Activated CD4-positive, alpha-beta memory T cell treated with anti-CD3 and anti-CD28 coated beads for 36 hours (primary cell): ENCODE measurements at regions of chr1 and their contacts with region 1.

Region 1: GRCh38 chr1:17606826-17607440 is 67.4 kb downstream of the ARHGEF10L start:
- DNase-seq: peak; percentile 64
- H3K4me3 Mint-ChIP-seq: no peak overlapping the region
- H3K27ac Mint-ChIP-seq: no peak overlapping the region
- H3K4me1 Mint-ChIP-seq: no peaks in the 10 kb centered on the region
- H3K27me3 Mint-ChIP-seq: no peaks in the 10 kb centered on the region

Region 2: DNA sequence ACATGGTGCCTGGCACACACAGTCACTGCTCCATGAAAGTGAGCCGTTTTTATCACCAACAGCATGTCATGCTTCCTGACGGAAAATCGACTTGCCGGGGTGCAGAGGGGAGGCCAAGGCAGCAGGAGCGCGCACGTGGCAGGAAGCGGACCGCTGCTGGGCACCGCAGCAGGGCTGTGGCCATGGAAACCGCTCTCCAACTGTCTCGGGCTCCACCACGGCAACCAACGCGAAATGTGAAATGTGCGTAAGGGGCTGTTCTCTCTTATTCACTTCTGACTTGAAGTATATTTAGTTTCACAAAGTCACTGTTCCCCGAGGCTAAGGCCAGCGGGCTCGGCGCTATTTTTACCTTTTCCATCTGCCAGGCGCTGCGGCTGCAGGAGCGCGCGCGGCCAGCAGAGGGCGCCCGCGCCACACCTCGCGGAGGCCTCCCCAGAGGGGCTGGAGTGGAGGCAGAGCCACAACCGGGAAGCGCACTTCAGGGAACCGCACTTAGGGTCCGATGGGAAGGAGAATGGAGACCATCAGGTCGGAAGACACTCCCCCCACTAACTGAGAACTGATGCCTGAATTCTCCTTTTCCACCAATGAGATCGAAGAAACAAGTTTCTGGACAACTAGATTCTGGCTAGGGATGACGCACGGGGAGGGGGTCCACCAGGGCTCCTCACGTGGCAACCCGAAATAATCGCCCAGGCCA is 187.2 kb before region 1 on chr1:
- CTCF ChIA-PET with region 1: no interaction called
- POLR2A ChIA-PET with region 1: no interaction called
- intact Hi-C with region 1: no loop called
- DNase-seq: peak; percentile 71
- H3K4me3 Mint-ChIP-seq: no peak overlapping the region
- H3K27ac Mint-ChIP-seq: peak overlapping the region; percentile 15
- H3K4me1 Mint-ChIP-seq: peaks cover 2% of the 10 kb centered on the region
- H3K27me3 Mint-ChIP-seq: no peaks in the 10 kb centered on the region

Region 3: DNA sequence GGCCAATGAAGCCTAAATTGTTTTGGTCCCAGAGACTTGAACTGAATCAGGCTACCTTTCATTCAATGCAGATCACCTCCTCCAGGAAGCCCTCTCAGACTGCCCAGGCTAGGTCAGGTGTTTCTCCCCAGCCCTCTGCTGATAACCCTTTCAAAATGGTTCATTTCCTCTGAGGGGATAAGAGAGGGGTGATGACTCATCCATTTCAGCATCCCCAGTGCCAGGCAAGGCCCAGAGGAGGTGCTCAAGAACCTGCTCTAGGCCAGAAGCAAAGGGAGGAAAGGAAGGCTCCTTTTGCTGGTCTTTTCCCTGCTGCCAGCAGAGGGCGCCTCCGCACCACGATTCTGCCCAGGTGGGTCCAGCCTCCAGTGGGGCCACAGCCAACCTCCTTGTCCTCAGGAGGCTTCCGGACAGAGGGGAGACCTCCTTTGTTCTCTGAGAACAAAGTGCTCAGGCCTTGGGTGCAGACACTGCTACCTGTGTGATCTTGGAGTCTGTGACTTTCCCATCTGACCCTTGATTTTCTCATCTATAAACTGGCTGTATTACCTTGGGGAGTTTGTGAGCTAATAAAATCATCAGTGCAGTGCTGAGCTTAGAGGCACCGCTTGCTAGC is 112.7 kb before region 1 on chr1:
- CTCF ChIA-PET with region 1: interaction called, 26 read pairs
- POLR2A ChIA-PET with region 1: no interaction called
- intact Hi-C with region 1: loop called (anchors 2 kb)
- DNase-seq: peak; percentile 77
- H3K4me3 Mint-ChIP-seq: no peak overlapping the region
- H3K27ac Mint-ChIP-seq: no peak overlapping the region
- H3K4me1 Mint-ChIP-seq: no peaks in the 10 kb centered on the region
- H3K27me3 Mint-ChIP-seq: no peaks in the 10 kb centered on the region

Region 4: DNA sequence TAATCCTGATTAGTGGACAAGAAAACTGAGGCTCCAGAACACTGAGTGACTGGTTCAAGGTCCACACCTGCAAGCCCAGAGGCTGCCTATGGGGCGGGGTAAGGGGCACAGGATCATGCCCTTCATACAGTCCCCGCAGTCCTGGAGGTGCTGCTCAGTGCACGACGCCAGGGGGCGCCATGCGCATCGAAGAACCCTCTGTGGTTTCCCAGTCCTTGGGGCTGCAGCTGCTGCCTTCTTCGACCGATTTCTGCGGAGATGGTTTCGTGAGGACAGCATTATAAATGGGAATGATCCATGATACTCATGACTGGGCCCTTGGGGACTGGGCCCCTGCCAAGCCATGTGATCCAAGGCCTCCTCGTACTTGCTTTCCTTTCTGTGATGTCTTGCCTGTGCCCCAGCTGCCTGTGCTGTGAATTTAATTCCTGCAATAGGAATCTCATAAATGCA is 104.6 kb before region 1 on chr1:
- CTCF ChIA-PET with region 1: interaction called, 45 read pairs
- POLR2A ChIA-PET with region 1: no interaction called
- intact Hi-C with region 1: no loop called
- DNase-seq: peak; percentile 70
- H3K4me3 Mint-ChIP-seq: no peak overlapping the region
- H3K27ac Mint-ChIP-seq: no peak overlapping the region
- H3K4me1 Mint-ChIP-seq: peaks cover 2% of the 10 kb centered on the region
- H3K27me3 Mint-ChIP-seq: peaks cover 12% of the 10 kb centered on the region

Region 5: GRCh38 chr1:17581389-17582123 is 25.4 kb before region 1 on chr1:
- CTCF ChIA-PET with region 1: no interaction called
- POLR2A ChIA-PET with region 1: no interaction called
- intact Hi-C with region 1: no loop called
- DNase-seq: peak; percentile 10
- H3K4me3 Mint-ChIP-seq: no peak overlapping the region
- H3K27ac Mint-ChIP-seq: no peak overlapping the region
- H3K4me1 Mint-ChIP-seq: no peaks in the 10 kb centered on the region
- H3K27me3 Mint-ChIP-seq: no peaks in the 10 kb centered on the region

Region 6: DNA sequence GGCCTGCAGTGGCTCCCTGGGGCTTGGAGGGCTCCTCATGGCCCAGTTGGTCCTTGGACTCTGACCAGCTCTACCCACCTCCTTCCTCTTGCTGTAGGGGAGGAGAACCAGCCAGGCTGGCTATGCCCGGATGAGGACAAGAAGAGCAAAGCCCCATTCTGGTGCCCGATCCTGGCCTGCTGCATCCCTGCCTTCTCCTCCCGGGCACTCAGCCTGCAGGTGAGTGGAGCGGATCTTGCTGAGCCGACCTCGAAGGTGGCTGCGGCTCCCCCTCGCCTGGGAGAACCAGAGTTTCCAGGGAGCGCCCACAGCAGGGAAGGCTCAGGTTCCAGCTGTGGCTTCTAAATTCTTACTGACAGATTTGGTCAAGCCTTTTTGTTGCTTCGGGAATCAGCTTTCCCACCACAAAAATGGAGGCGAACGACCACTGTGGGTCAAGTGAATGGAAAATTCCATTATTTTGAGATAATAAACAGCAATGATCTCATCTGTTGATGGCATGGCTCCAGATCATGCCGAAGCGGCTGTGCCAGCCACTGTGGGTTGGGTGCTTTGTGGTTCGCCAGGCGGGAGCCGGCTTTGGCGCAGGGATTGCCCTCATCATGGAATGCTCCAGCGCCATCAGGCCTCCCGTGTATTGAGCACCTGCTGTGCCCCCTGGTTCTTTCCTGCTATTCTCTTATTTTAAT is 41.7 kb after region 1 on chr1:
- CTCF ChIA-PET with region 1: no interaction called
- POLR2A ChIA-PET with region 1: no interaction called
- intact Hi-C with region 1: no loop called
- DNase-seq: no peak
- H3K4me3 Mint-ChIP-seq: no peak overlapping the region
- H3K27ac Mint-ChIP-seq: no peak overlapping the region
- H3K4me1 Mint-ChIP-seq: no peaks in the 10 kb centered on the region
- H3K27me3 Mint-ChIP-seq: no peaks in the 10 kb centered on the region